Mammary epithelial cell (primary cell): ENCODE measurements at regions of chr7 and their contacts with region 1.

Region 1: GRCh38 chr7:94301024-94301586 is 93.6 kb upstream of the COL1A2 start:
- DNase-seq: peak; percentile 88
- H3K4me3 ChIP-seq: no peak overlapping the region
- H3K27ac ChIP-seq: peak overlapping the region; percentile 37
- H3K4me1 ChIP-seq: peaks cover 33% of the 10 kb centered on the region
- H3K27me3 ChIP-seq: no peaks in the 10 kb centered on the region
- CTCF ChIP-seq: no peak

Region 2: DNA sequence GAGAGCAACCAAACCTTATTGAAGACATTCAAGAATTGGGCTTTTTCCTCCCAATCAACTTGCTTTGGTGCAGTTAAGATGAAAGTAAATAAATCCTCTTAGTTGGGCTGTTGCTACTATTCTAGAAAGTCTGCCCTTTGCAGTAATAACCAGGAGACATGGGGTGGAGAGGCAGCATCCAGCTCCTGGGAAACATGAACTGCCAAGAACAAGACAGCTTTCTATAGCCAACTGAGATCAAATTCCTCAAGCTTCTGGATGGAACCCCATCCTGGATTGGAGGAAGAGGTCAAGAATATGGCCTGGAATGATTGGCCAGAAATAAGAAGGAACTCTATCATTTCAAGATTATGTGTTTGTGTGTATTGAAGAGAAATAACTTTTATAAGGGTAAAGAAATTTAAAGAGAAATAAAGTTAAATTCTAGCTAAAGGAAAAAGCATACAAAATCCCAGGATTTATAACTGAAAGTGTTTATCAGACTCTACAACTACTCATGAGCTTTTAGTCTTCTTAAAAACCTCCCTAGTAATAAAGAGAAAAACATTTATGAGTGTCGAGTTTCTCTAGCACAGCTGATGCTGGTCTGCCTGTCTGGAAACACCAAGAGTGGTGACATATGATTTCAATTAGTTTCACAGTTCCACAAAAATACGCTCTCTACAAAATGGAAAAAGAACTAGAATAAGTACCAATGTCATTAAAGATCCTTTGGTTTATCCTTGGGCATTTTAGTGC is 23.4 kb after region 1 on chr7:
- CTCF ChIA-PET with region 1: no interaction called
- dilution Hi-C with region 1: no loop called
- in situ Hi-C with region 1: no loop called
- intact Hi-C with region 1: no loop called
- DNase-seq: no peak
- H3K4me3 ChIP-seq: no peak overlapping the region
- H3K27ac ChIP-seq: no peak overlapping the region
- H3K4me1 ChIP-seq: no peaks in the 10 kb centered on the region
- H3K27me3 ChIP-seq: no peaks in the 10 kb centered on the region
- CTCF ChIP-seq: no peak

Region 3: GRCh38 chr7:94335586-94335985 is 34.5 kb after region 1 on chr7:
- CTCF ChIA-PET with region 1: no interaction called
- dilution Hi-C with region 1: no loop called
- in situ Hi-C with region 1: no loop called
- intact Hi-C with region 1: loop called (anchors 2 kb)
- DNase-seq: peak; percentile 91
- H3K4me3 ChIP-seq: no peak overlapping the region
- H3K27ac ChIP-seq: peak overlapping the region; percentile 51
- H3K4me1 ChIP-seq: peaks cover 39% of the 10 kb centered on the region
- H3K27me3 ChIP-seq: no peaks in the 10 kb centered on the region
- CTCF ChIP-seq: no peak